ENCODE measurements at regions of chr19 and their contacts with region 1.

Region 1: GRCh38 chr19:53195265-53195903 is 2.2 kb upstream of the ZNF665 start:
- DNase-seq: peak; percentile 74 to 76
- H3K4me3 ChIP-seq: no peak overlapping the region
- H3K27ac ChIP-seq: no peak overlapping the region
- H3K4me1 ChIP-seq: peaks cover 8% of the 10 kb centered on the region
- H3K27me3 ChIP-seq: no peaks in the 10 kb centered on the region
- CTCF ChIP-seq: peak; percentile 97

Region 2: DNA sequence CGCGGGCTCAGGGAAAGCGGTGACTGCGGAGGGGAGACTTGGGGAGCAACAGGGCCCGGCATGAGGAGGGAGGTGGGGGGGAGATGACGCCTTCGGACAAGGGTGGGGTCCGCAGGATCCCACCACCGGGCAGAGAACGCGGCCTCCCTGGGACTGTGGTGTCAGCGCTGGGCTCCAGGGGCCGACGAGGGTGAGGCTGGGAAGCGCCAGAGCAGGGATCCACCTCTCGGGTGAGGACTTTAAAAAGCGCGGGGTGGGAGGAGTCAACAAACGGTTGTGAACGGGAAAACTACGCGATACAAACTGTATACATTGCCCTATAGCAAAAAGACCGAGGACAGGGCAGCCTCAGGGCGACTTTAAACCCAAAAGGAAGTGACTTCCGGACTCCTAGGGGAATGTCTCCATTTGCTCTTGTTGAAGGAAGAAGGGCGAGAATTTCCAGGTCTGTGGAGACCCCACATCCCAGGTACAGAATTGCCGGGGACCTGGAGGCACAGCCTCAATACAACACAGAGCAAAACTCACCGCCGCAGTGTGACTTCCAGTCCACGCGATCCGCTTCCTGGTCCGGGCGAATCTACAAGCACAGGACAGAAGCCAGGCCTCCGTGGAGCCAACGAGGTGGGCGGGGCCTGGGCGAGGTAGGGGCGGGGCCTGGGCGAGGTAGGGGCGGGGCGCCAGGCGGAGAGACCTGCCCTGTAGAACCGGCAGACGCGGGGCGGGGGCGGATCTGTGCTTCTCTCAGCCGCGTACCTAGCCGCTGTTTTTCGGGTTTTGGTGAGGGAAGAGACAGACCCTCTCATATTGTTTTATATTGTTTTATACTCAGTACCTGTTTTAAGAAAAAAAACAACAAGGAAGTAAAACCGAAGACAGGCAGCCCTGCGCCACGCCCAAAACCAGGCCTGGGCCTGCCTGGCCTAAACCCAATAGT is 272.3 kb before region 1 on chr19 and contains the start of gene ZNF888:
- CTCF ChIA-PET with region 1: no interaction called
- POLR2A ChIA-PET with region 1: no interaction called
- intact Hi-C with region 1: loop called (anchors 10 kb)
- DNase-seq: peak; percentile 75 to 91
- H3K4me3 ChIP-seq: peak within 1 kb of the TSS; percentile 96
- H3K27ac ChIP-seq: peak within 1 kb of the TSS; percentile 82
- H3K4me1 ChIP-seq: 0 out of 2 replicates have a peak, but pooled peaks cover 6% of the 10 kb centered on the region
- H3K27me3 ChIP-seq: no peaks in the 10 kb centered on the region
- CTCF ChIP-seq: no peak
- total RNA-seq, gene ZNF888: 10.8 and 14.5 TPM in 2 replicates

Region 3: GRCh38 chr19:53103198-53103944 is 92.0 kb before region 1 on chr19 and contains the start of gene ZNF160:
- CTCF ChIA-PET with region 1: no interaction called
- POLR2A ChIA-PET with region 1: no interaction called
- intact Hi-C with region 1: loop called (anchors 1 kb)
- DNase-seq: peak; percentile 92 to 99
- H3K4me3 ChIP-seq: peak within 1 kb of the TSS; percentile 94
- H3K27ac ChIP-seq: peak within 1 kb of the TSS; percentile 60
- H3K4me1 ChIP-seq: peaks cover 12% of the 10 kb centered on the region
- H3K27me3 ChIP-seq: no peaks in the 10 kb centered on the region
- CTCF ChIP-seq: no peak
- total RNA-seq, gene ZNF160: 25.1 and 27.4 TPM in 2 replicates

Region 4: DNA sequence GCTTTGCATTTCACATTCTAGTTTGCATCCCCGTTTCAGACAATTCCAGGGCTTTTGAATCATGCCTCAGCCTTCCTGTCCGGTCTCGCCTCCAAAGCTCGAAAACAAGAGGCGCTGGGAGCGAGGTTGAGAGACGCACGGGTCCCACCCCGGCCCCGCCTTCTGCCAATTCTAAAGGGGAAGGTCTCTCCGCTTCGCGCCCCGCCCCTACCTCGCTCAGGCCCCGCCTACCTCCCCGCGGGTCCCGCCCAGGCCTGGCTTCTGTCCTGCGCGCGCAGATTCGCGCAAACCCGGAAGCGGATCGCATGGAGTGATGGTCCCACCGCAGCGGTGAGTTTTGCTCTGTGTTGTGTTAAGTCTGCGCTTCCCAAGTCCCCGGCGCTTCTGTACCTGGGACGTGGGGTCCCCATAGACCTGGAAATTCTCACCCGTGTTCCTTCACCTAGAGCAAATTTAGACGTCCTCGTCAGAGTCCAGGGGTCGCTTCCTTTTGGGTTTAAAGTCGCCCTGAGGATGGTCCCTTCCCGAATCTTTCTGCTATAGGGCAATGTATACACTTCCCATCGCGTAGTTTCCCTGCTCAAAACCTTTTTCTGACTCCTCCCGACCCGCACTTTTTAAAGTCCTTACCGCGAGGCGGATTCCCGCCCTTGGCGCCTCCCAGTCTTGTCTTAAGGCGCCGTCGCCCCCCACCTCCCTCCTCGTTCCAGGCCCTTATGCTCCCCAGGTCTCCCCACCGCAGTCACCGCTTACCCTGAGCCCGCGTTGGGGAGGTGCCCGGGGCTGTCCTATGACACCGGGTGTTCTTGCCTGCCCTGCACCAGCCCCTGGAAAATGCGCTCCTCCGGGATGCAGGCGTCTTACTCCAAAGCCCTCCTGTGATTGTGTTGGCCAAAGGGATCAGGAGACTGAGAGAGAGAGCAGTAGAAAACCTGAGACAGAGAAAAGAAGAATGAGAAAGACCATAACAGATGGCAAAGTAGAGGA is 138.4 kb after region 1 on chr19 and contains the start of gene ZNF845:
- CTCF ChIA-PET with region 1: no interaction called
- POLR2A ChIA-PET with region 1: interaction called, 3 read pairs
- intact Hi-C with region 1: loop called (anchors 1 kb)
- DNase-seq: peak; percentile 77 to 99
- H3K4me3 ChIP-seq: peak within 1 kb of the TSS; percentile 74
- H3K27ac ChIP-seq: 0 out of 2 replicates have a peak within 1 kb of the TSS, but pooled peaks have one; percentile 6
- H3K4me1 ChIP-seq: peaks cover 12% of the 10 kb centered on the region
- H3K27me3 ChIP-seq: no peaks in the 10 kb centered on the region
- CTCF ChIP-seq: no peak
- total RNA-seq, gene ZNF845: 8.2 and 8.6 TPM in 2 replicates

Region 5: DNA sequence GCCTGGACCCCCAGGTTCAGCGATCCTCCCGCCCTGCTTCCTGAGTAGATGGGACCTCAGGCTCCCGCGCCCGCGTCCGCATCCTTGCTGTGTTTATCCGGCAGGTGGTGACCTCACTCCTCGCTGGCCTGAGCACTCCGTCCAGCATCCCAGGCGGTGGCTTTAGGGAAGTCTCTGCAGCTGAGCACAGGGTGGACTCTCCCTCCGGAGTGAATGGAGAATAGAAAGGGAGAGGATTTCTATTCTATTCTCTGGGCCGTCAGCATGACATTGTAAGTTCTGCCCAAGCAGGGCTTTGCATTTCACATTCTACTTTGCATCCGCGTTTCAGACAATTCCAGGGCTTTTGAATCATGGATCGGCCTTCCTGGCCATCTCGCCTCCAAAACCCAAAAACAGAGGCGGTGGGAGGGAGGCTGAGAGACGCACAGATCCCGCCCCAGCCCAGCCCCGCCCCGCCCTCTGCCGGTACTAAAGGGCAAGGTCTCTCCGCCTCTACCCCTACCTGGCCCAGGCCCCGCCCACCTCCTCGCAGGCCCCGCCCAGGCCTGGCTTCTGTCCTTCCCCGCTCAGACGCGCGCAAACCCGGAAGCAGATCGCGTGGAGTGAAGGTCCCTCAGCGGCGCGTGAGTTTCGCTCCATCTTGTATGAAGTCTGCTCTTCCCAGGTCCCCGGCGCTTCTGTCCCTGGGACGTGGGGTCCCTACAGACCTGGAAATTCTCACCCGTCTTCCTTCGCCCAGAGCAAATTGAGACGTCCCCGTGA is 169.9 kb after region 1 on chr19 and contains the start of gene ZNF525:
- CTCF ChIA-PET with region 1: no interaction called
- POLR2A ChIA-PET with region 1: no interaction called
- intact Hi-C with region 1: loop called (anchors 10 kb)
- DNase-seq: peak; percentile 73 to 95
- H3K4me3 ChIP-seq: peak within 1 kb of the TSS; percentile 63
- H3K27ac ChIP-seq: peak within 1 kb of the TSS; percentile 33
- H3K4me1 ChIP-seq: 0 out of 2 replicates have a peak, but pooled peaks cover 6% of the 10 kb centered on the region
- H3K27me3 ChIP-seq: no peaks in the 10 kb centered on the region
- CTCF ChIP-seq: peak; percentile 55
- total RNA-seq, gene ZNF525: 19.7 and 21.8 TPM in 2 replicates

Region 6: DNA sequence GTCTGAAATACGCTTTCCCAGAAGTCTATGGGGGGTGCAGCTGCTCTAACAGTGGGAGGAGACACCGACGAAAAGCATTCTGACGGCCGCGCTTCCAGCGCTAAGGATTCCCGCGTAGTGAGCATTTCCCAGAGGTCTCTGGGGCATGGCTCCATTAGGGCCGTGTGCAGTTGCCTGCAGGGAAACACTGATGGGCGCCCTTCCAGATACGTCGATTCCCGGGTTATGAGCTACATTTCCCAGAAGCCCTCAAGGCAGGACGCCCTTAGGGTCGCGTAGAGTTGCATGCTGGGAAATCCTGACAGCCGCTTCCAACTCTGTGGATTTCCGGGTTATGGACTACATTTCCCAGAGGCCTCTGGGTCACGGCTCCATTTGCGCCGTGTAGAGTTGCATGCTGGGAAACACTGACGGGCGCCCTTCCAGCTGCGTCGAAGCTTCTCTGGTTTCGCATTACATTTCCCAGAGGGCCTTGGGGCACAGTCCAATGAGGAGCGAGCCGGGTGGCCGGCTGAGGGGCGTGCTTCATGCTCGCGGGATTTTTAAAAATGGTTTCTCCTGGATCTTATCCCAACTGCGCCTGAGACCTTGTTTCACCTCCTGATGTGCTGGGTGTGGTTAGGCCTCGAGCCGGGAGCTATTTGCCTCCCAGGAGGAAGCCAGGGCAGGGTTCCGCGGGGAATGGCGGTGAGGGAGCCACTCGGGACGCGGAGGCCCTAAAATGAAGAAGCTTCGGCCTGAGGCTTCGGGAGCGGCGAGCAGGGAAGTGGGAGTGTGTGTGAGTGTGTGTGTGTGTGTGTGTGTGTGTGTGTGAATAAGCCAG is 325.4 kb after region 1 on chr19:
- CTCF ChIA-PET with region 1: interaction called, 14 read pairs
- POLR2A ChIA-PET with region 1: no interaction called
- intact Hi-C with region 1: no loop called
- DNase-seq: peak; percentile 93 to 97
- H3K4me3 ChIP-seq: peak overlapping the region; percentile 62
- H3K27ac ChIP-seq: no peak overlapping the region
- H3K4me1 ChIP-seq: peaks cover 14% of the 10 kb centered on the region
- H3K27me3 ChIP-seq: no peaks in the 10 kb centered on the region
- CTCF ChIP-seq: no peak

Region 7: GRCh38 chr19:54029930-54030490 is 834.6 kb after region 1 on chr19:
- CTCF ChIA-PET with region 1: no interaction called
- POLR2A ChIA-PET with region 1: no interaction called
- intact Hi-C with region 1: loop called (anchors 10 kb)
- DNase-seq: peak; percentile 65 to 68
- H3K4me3 ChIP-seq: no peak overlapping the region
- H3K27ac ChIP-seq: no peak overlapping the region
- H3K4me1 ChIP-seq: peaks cover 15% of the 10 kb centered on the region
- H3K27me3 ChIP-seq: no peaks in the 10 kb centered on the region
- CTCF ChIP-seq: peak; percentile 87